Pancreas (tissue), 10 donors: ENCODE measurements at regions of chr3 and their contacts with region 1.

Region 1: DNA sequence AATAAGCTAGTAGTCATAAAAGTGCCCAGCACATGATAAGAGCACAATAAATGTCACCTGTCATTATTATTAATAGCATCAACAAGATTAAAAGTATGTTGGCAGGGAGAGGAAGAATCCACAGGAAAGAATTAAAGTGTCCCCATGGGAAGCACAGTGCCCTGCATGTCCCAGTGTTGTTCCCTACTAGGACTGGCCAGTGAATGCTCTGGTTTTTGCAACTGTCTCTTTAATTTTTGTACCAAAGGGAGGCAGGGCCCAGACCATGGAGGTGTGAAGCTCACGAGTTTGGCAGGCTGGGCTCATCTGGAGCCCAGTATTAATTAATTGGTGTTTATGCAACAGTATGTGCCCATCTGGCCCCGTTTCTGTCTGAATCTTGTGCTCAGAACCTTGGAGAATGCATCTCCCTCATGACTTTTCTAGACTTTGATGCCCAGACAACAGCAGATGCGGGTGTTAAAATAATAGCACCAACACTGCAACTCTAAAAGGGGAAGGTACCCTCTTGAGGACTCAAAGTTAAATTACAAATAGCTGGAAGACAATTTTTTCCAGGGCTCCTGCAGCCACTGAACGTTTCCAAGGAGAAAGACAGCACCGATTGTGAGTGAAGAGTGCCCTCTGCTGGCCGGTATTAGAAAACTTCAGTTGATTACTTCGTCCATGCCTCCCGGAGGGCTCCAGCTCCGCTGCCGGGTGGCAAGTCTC is 71.9 kb upstream of the SPATA12 start:
- DNase-seq: peak; percentile 62 to 82 (median 71)
- ATAC-seq: peak; percentile 75 to 88 (median 83)
- H3K4me3 ChIP-seq: no peak overlapping the region
- H3K27ac ChIP-seq: no peak overlapping the region
- H3K4me1 ChIP-seq: no peaks in the 10 kb centered on the region
- H3K27me3 ChIP-seq: no peaks in the 10 kb centered on the region
- CTCF ChIP-seq: peak; percentile 41 to 72 (median 62)

Region 2: DNA sequence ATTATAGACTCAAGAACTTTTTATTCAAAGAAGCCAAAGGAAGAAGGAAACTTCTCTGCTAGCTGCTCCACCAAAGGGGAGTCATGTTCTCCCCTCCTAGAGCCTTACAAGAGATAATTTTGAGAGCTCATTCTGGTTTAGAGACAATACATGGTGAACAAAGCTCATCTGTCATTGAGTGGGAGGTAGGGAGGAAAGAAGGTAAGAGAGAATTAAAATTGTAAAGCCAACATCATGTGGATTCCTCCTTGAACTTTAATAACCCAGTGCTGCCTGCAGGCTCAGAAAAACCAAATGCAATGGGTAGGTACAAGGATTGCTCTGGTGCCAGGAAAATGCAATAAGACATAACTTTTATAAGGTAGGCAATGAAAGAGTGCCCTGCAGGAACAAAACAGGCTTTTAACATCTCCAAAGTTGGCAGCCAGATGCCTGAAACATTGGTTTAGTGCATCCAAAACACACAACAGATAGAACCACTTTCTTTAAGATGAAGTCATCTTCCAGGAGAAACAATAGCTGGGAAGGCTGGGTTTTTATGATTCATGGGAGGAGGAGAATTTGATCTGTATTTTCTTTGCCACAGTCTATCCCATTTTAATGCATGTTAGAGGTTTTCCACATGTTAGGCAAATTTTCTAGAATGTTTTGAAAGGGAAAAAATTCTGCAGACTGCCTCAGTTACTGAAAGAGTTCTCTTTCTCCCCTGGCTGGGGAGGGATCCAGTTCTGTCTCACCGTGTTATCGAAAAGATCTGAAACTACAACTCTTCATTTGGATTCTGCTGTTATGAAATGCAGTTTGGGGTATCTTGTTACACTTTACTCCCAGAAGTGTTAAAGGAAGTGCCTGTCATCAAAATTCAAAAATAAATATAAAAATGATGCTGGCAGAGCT is 175.6 kb before region 1 on chr3:
- intact Hi-C with region 1: loop called in 2 of 3 experiments (anchors 5 to 10 kb)
- DNase-seq: no peak
- ATAC-seq: no peak
- H3K4me3 ChIP-seq: no peak overlapping the region
- H3K27ac ChIP-seq: no peak overlapping the region
- H3K4me1 ChIP-seq: peaks cover 0 to 3% (median 0%) of the 10 kb centered on the region in 3 donors
- H3K27me3 ChIP-seq: no peaks in the 10 kb centered on the region
- CTCF ChIP-seq: no peak

Region 3: GRCh38 chr3:57068437-57069089 is 80.0 kb after region 1 on chr3:
- intact Hi-C with region 1: no loop called
- DNase-seq: peak in 2 of 6 donors; percentile 5 to 21
- ATAC-seq: peak in 3 of 4 donors; percentile 75 to 90 (median 88)
- H3K4me3 ChIP-seq: no peak overlapping the region
- H3K27ac ChIP-seq: peak overlapping the region in 2 of 4 donors; percentile 29 to 42
- H3K4me1 ChIP-seq: peaks cover 0 to 6% (median 0%) of the 10 kb centered on the region in 3 donors
- H3K27me3 ChIP-seq: no peaks in the 10 kb centered on the region
- CTCF ChIP-seq: no peak